Lower leg skin (tissue), 4 donors: ENCODE measurements at regions of chr4 and their contacts with region 1.

Region 1: GRCh38 chr4:15956179-15956850 is 6.7 kb downstream of the FGFBP2 start:
- DNase-seq: peak; percentile 80 to 93
- H3K4me3 ChIP-seq: no peak overlapping the region
- CTCF ChIP-seq: peak in 1 of 3 donors; percentile 86
- POLR2A ChIP-seq: no peak

Region 2: GRCh38 chr4:15636835-15637234 is 319.5 kb before region 1 on chr4:
- intact Hi-C with region 1: no loop called
- DNase-seq: no peak
- H3K4me3 ChIP-seq: no peak overlapping the region
- CTCF ChIP-seq: no peak
- POLR2A ChIP-seq: no peak

Region 3: DNA sequence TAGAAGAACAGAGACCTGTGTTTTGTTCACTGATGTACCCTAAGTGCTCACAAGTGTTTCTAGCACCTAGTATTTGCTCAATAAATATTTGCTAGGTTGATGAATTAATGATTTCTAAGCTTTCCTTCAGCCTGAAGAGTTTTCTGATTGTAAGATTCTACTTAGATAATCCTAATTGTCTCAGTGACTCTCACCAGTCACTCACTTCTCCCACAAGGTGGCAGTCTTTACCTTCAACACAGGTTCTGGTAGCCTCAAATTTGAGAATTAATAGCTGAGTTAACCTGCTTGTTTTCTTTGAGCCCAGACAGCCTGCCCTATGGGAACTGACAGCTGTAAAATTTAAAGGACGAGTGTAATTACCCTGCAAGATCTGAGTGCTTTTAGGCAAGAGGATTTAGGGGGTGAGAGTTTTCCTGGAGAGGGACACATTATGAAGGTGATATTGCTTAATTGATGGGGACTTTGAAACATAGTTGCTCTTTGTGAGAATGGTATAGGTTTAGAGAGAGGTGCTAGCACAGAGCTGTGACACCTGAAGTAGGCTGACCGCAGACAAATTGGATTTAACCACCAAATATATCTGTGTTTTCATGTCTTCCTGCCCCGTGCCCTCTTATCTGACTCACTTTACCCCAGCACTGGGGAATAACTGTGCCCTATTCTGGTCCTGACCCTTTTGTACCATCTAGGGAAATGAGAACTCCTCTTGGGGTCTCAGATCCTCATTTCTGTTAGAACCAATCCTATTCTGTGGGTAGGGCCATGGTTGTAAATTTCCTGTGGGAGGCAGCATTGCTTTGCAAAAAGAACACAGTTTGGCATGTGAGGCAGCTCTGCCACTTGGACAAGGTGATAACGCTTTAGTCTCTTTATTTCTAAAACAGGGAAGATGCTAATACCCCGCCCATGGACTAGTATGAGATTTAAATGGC is 150.5 kb before region 1 on chr4:
- intact Hi-C with region 1: loop called (anchors 5 kb)
- DNase-seq: peak in 1 of 2 donors; percentile 48
- H3K4me3 ChIP-seq: no peak overlapping the region
- CTCF ChIP-seq: peak in 1 of 3 donors; percentile 49
- POLR2A ChIP-seq: no peak

Region 4: DNA sequence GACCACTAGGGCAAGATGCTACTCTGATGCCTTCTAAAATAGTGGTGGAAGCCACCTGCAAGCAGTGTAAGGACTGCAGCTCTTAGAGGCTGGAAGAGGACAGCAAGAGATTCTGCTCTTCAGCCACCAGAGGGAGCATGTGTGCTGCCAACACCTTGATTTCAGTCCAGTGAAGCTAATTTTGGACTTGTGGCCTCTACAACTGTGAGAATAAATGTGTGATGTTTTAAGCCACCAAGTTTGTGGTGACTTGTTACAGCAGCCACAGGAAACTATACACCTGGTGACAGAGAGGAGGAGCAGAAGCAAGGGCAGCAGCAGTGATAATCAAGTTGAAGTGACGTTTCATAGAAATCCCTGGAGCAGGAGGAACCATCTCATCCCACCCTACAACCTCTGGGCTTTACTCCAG is 73.6 kb before region 1 on chr4:
- intact Hi-C with region 1: loop called (anchors 5 kb)
- DNase-seq: no peak
- H3K4me3 ChIP-seq: no peak overlapping the region
- CTCF ChIP-seq: peak in 1 of 3 donors; percentile 27
- POLR2A ChIP-seq: no peak